Dorsolateral prefrontal cortex (tissue), 120 donors: ENCODE measurements at regions of chr10 and their contacts with region 1.

Region 1: DNA sequence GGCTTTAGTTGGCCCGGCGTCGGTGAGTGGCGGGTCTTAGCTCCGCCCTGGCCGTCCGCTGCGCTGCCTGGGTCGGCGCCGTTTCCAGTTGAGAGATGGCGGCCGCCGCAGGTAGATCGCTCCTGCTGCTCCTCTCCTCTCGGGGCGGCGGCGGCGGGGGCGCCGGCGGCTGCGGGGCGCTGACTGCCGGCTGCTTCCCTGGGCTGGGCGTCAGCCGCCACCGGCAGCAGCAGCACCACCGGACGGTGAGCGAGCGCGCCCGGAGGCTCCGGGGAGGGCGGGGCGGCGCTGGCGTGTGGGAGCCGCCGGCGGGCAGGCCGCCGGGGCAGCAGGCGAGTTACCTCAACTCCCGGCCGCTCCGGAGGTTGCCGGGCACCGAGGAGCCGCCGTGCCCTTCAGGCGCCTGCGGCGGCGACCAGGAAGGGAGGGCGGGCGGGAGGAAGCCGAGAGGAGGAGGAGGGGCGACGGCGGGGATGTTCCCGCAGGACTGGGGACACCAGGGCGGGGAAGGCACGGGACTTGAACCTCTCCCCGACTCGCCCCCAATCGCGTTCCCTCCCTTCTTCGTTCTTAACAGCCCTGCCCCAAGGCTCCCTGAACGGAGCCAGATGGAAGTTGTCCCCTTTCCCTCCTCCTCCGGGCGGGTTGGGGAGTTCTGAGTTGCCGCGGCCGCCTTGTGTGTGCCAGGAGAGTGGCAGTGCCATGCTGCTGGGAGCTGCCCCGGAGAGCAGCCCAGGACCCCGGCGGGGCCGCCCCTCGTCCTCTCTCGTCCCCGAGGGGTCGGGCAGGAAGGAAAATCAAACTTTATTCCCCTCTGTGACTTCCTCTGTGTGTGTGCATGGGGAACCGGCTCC is at the start of gene MCU:
- DNase-seq: peak; percentile 88 to 98 (median 97)
- H3K4me3 ChIP-seq: peak within 1 kb of the TSS; percentile 48 to 94 (median 84)
- H3K27ac ChIP-seq: peak within 1 kb of the TSS; percentile 18 to 97 (median 88)
- H3K27me3 ChIP-seq: no peaks in the 10 kb centered on the region
- CTCF ChIP-seq: peak in 8 of 56 donors; percentile 2 to 25 (median 14)
- total RNA-seq, gene MCU: 12.0 to 32.9 (median 20.8) TPM

Region 2: GRCh38 chr10:72354478-72355213 is 337.6 kb before region 1 on chr10 and contains the start of gene DNAJB12:
- intact Hi-C with region 1: loop called in 1 of 2 experiments (anchors 5 kb)
- DNase-seq: peak; percentile 79 to 93 (median 88)
- H3K4me3 ChIP-seq: peak within 1 kb of the TSS; percentile 66 to 100 (median 91)
- H3K27ac ChIP-seq: peak within 1 kb of the TSS; percentile 89 to 100 (median 98)
- H3K27me3 ChIP-seq: no peaks in the 10 kb centered on the region
- CTCF ChIP-seq: peak in 34 of 56 donors; percentile 3 to 52 (median 24)
- total RNA-seq, gene DNAJB12: 25.5 to 44.3 (median 34.1) TPM

Region 3: DNA sequence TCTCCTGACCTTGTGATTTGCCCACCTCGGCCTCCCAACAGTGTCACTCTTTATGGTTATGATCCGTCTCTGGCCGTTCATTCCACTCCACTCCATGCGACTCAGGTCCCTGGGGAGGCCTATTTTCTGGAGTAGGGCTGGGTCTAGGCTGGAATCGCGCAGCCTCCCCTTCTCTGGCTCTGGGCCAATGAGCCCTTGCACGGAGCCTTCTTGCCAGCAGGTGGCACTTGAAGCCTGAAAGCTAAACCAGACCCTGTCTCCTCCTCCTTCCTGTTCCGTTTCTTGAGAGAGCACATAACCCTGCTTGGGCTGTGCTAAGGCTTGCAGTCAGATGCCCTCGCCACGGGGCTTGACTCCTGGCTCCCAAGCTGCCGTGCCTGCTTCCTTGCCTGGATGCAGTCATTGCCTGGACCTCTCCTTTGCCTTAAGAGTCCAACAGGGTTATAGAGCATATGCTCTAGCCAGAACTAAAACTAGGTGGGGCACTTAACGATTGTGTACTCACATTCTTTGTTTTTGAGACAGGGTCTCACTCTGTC is 328.0 kb before region 1 on chr10:
- intact Hi-C with region 1: loop called (anchors 5 kb)
- DNase-seq: peak; percentile 71 to 89 (median 84)
- H3K4me3 ChIP-seq: peak overlapping the region in 50 of 59 donors; percentile 1 to 59 (median 32)
- H3K27ac ChIP-seq: peak overlapping the region in 35 of 59 donors; percentile 23 to 88 (median 55)
- H3K27me3 ChIP-seq: no peaks in the 10 kb centered on the region
- CTCF ChIP-seq: peak; percentile 65 to 98 (median 94)

Region 4: DNA sequence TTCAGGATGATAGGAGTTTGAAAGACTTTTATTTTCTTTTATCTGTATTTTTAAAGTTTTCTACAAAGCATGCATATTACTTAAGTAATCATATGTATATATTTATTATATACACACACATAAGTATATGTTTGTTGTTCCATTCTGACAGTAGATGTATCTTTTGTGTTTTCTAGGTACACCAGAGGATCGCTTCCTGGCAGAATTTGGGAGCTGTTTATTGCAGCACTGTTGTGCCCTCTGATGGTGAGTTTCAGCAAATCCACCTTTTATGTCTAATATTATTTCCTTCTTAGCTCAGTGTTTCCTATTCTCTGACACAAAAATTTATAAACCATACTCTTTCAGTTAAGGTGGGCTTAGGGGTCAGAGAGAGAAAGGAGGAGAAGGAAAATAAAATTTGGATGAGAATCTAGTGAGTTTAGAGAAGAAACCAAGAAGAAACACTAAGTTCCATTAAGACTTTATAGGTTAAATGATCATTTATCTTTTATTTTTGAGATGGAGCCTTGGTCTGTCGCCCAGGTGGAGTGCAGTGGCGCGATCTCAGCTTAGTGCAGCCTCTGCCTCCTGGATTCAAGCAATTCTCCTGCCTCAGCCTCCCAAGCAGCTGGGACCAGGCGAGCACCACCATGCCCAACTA is 142.0 kb after region 1 on chr10:
- intact Hi-C with region 1: loop called (anchors 5 kb)
- DNase-seq: peak in 4 of 10 donors; percentile 19 to 66 (median 55)
- H3K4me3 ChIP-seq: no peak overlapping the region
- H3K27ac ChIP-seq: no peak overlapping the region
- H3K27me3 ChIP-seq: no peaks in the 10 kb centered on the region
- CTCF ChIP-seq: peak; percentile 50 to 94 (median 78)